ENCODE measurements at regions of chr1 and their contacts with region 1.

Region 1: GRCh38 chr1:228165372-228166169 is at the start of gene IBA57:
- DNase-seq: peak; percentile 100
- ATAC-seq: peak; percentile 86 to 94 (median 89)
- H3K4me3 ChIP-seq: peak within 1 kb of the TSS; percentile 33 to 88 (median 74)
- H3K27ac ChIP-seq: peak within 1 kb of the TSS; percentile 89 to 100 (median 100)
- H3K4me1 ChIP-seq: peaks cover 0 to 57% (median 43%) of the 10 kb centered on the region in 12 donors
- H3K27me3 ChIP-seq: peaks cover 0 to 10% (median 0%) of the 10 kb centered on the region in 9 donors
- CTCF ChIP-seq: peak; percentile 80 to 97 (median 91)
- POLR2A ChIP-seq: peak; percentile 42 to 87
- total RNA-seq, gene IBA57: 8.7 to 18.6 (median 12.3) TPM

Region 2: GRCh38 chr1:228109073-228109961 is 56.3 kb before region 1 on chr1 and contains the start of gene MRPL55:
- intact Hi-C with region 1: loop called in 1 of 10 experiments (anchors 5 kb)
- DNase-seq: peak; percentile 96 to 98 (median 97)
- ATAC-seq: peak; percentile 94 to 98 (median 95)
- H3K4me3 ChIP-seq: peak within 1 kb of the TSS; percentile 65 to 99 (median 92)
- H3K27ac ChIP-seq: peak within 1 kb of the TSS; percentile 53 to 95 (median 88)
- H3K4me1 ChIP-seq: peaks cover 5 to 31% (median 20%) of the 10 kb centered on the region in 12 donors
- H3K27me3 ChIP-seq: no peaks in the 10 kb centered on the region
- CTCF ChIP-seq: peak in 5 of 12 donors; percentile 4 to 38 (median 22)
- POLR2A ChIP-seq: peak; percentile 48 to 82
- total RNA-seq, gene MRPL55: 35.5 to 125 (median 51.2) TPM

Region 3: GRCh38 chr1:228149341-228150119 is 16.0 kb before region 1 on chr1 and contains the start of gene GJC2:
- intact Hi-C with region 1: loop called in 2 of 10 experiments (anchors 2 kb)
- DNase-seq: peak in 4 of 5 donors; percentile 72 to 76 (median 74)
- ATAC-seq: peak in 3 of 4 donors; percentile 36 to 74 (median 66)
- H3K4me3 ChIP-seq: peak within 1 kb of the TSS in 11 of 12 donors; percentile 5 to 51 (median 38)
- H3K27ac ChIP-seq: peak within 1 kb of the TSS; percentile 60 to 97 (median 84)
- H3K4me1 ChIP-seq: peaks cover 16 to 62% (median 49%) of the 10 kb centered on the region in 12 donors
- H3K27me3 ChIP-seq: no peaks in the 10 kb centered on the region
- CTCF ChIP-seq: no peak
- POLR2A ChIP-seq: peak in 1 of 2 donors; percentile 34
- total RNA-seq, gene GJC2: 0.40 to 3.8 (median 0.88) TPM

Region 4: GRCh38 chr1:228206582-228207351 is 41.2 kb after region 1 on chr1:
- intact Hi-C with region 1: loop called in 6 of 10 experiments (anchors 1 to 5 kb)
- DNase-seq: peak in 1 of 5 donors; percentile 18
- ATAC-seq: peak in 3 of 4 donors; percentile 2 to 14 (median 4)
- H3K4me3 ChIP-seq: no peak overlapping the region
- H3K27ac ChIP-seq: peak overlapping the region in 11 of 12 donors; percentile 55 to 100 (median 96)
- H3K4me1 ChIP-seq: peaks cover 0 to 43% (median 17%) of the 10 kb centered on the region in 12 donors
- H3K27me3 ChIP-seq: no peaks in the 10 kb centered on the region
- CTCF ChIP-seq: no peak
- POLR2A ChIP-seq: no peak

Region 5: DNA sequence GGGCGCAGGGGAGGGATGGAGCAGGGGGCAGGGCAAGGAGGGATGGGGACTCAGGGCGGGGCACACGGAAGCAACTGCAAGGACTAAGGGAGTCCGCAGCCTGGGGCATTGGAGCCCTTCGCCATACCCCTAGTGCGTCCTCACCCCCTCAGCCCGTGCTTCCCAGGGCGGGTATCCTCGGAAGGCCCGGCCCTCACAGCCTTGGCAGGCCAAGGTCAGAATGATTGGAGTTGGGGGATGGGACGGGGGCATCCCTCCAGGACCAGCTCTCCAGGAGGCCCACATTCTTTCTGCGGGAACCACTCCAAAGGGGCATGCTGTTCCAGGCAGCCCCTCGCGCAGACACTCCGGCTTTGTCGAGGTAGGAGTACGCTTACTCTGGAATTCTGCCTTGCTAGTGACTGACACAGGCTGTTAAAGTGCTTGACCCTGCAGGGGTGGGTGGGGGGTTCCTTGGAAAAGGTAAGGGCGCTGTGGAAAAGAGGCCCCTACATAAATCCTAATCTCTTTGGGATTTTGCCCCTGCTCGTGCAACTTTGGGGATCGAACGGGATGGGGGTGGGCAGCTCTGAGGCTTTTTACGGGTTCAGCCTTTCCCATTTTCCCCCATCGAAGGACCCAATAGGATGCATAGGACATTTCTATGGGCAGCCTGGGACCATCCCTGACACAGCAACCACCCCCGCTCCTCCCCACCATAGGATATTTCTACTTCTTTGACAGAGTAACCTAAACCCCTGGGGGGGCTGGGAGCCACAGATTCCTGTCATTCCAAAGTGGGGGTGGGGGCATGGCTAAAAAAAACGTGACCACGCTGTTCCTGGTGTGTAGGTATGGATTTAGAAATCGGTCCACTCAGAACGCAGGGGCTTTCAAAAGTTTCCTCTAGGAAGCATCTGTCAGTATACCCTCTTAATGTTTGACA is 241.8 kb after region 1 on chr1:
- intact Hi-C with region 1: no loop called
- DNase-seq: peak in 1 of 5 donors; percentile 53
- ATAC-seq: no peak
- H3K4me3 ChIP-seq: peak overlapping the region; percentile 81 to 100 (median 96)
- H3K27ac ChIP-seq: peak overlapping the region in 11 of 12 donors; percentile 67 to 94 (median 86)
- H3K4me1 ChIP-seq: peaks cover 10 to 46% (median 24%) of the 10 kb centered on the region in 12 donors
- H3K27me3 ChIP-seq: no peaks in the 10 kb centered on the region
- CTCF ChIP-seq: no peak
- POLR2A ChIP-seq: peak in 1 of 2 donors; percentile 24